ENCODE measurements at regions of chr2 and their contacts with region 1.

Region 1: GRCh38 chr2:78861546-78861945 is 164.0 kb upstream of the REG3G start:
- DNase-seq: peak; percentile 7
- ATAC-seq: no peak
- H3K4me3 ChIP-seq: no peak overlapping the region
- H3K27ac ChIP-seq: no peak overlapping the region
- H3K4me1 ChIP-seq: no peaks in the 10 kb centered on the region
- H3K27me3 ChIP-seq: no peaks in the 10 kb centered on the region
- CTCF ChIP-seq: peak; percentile 60; the same call in 1 of the 2 replicates

Region 2: DNA sequence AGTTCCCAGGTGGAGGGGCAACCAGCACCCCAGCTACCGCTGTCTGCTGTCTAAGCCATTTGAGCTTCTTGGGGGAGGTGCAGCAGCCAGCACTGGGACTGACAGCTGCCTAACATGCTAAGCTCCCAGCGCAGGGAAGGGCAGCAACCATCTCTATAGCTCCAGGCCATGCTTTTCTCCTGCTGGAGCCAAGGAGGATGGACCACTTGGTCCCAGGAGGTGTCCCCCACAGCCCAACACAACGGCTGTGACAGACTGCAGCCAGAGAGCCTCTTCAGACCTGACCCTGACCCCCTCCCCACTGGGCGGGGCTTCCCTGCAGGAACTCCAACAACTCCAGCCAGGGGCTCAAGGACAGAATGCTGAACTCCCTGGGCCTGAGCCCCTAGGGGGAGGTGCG is 206.6 kb before region 1 on chr2:
- CTCF ChIA-PET with region 1: no interaction called
- POLR2A ChIA-PET with region 1: no interaction called
- in situ Hi-C with region 1: no loop called
- intact Hi-C with region 1: no loop called
- DNase-seq: no peak
- ATAC-seq: no peak
- H3K4me3 ChIP-seq: no peak overlapping the region
- H3K27ac ChIP-seq: no peak overlapping the region
- H3K4me1 ChIP-seq: no peaks in the 10 kb centered on the region
- H3K27me3 ChIP-seq: no peaks in the 10 kb centered on the region
- CTCF ChIP-seq: no peak

Region 3: DNA sequence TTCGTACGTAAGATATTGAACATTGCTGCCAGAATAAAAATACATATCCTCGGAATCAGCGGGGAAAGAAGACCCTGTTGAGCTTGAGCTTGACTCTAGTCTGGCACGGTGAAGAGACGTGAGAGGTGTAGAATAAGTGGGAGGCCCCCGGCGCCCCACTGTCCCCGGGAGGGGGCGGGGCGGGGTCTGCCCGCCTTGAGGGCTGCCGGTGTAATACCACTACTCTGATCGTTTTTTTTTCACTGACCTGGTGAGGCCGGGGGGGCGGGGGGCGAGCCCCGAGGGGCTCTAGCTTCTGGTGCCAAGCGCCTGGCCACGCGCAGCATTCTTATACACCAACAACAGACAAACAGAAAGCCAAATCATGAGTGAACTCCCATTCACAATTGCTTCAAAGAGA is 160.0 kb before region 1 on chr2:
- CTCF ChIA-PET with region 1: interaction called, 11 read pairs
- POLR2A ChIA-PET with region 1: no interaction called
- in situ Hi-C with region 1: no loop called
- intact Hi-C with region 1: no loop called
- DNase-seq: no peak
- ATAC-seq: no peak
- H3K4me3 ChIP-seq: no peak overlapping the region
- H3K27ac ChIP-seq: no peak overlapping the region
- H3K4me1 ChIP-seq: no peaks in the 10 kb centered on the region
- H3K27me3 ChIP-seq: no peaks in the 10 kb centered on the region
- CTCF ChIP-seq: no peak

Region 4: DNA sequence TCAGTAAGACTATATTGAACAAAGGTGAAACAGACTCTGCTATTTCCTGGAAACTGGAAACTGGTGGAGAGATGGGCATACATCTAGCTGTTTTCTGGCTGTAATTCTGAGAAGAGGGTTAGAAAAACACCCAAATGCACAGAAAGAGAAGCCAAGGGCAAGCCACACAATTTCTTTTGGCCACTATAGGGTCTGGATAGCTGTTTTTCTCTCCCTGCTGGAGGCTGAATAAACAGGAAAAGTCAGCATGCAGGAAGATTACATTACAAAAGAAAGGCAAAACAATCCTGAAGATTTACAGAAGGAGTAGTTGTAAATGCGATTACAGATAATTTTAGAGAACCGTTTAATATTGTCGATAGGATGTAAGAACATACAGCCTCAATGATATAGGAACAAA is 22.3 kb before region 1 on chr2:
- CTCF ChIA-PET with region 1: no interaction called
- POLR2A ChIA-PET with region 1: no interaction called
- in situ Hi-C with region 1: no loop called
- intact Hi-C with region 1: no loop called
- DNase-seq: no peak
- ATAC-seq: no peak
- H3K4me3 ChIP-seq: no peak overlapping the region
- H3K27ac ChIP-seq: no peak overlapping the region
- H3K4me1 ChIP-seq: no peaks in the 10 kb centered on the region
- H3K27me3 ChIP-seq: no peaks in the 10 kb centered on the region
- CTCF ChIP-seq: no peak

Region 5: GRCh38 chr2:78887446-78887845 is 25.9 kb after region 1 on chr2:
- CTCF ChIA-PET with region 1: no interaction called
- POLR2A ChIA-PET with region 1: no interaction called
- in situ Hi-C with region 1: no loop called
- intact Hi-C with region 1: no loop called
- DNase-seq: no peak
- ATAC-seq: no peak
- H3K4me3 ChIP-seq: no peak overlapping the region
- H3K27ac ChIP-seq: no peak overlapping the region
- H3K4me1 ChIP-seq: no peaks in the 10 kb centered on the region
- H3K27me3 ChIP-seq: peaks cover 2% of the 10 kb centered on the region; the same call in 1 of the 2 replicates
- CTCF ChIP-seq: no peak

Measured in Panc1 (cell line).